CD4-positive, alpha-beta memory T cell (primary cell): ENCODE measurements at regions of chr13 and their contacts with region 1.

Region 1: GRCh38 chr13:113208424-113209335 is at the start of gene PCID2:
- DNase-seq: peak; percentile 89 to 95 (median 91)
- H3K4me3 ChIP-seq: peak within 1 kb of the TSS; percentile 73 to 80
- H3K4me3 Mint-ChIP-seq: peak within 1 kb of the TSS; percentile 86 to 92 (median 90)
- H3K27ac ChIP-seq: peak within 1 kb of the TSS; percentile 89
- H3K27ac Mint-ChIP-seq: peak within 1 kb of the TSS; percentile 89 to 96 (median 95)
- H3K4me1 ChIP-seq: peaks cover 78% of the 10 kb centered on the region
- H3K4me1 Mint-ChIP-seq: peaks cover 43 to 64% (median 53%) of the 10 kb centered on the region in 4 donors
- H3K27me3 ChIP-seq: no peaks in the 10 kb centered on the region
- H3K27me3 Mint-ChIP-seq: no peaks in the 10 kb centered on the region
- total RNA-seq, gene PCID2: 78.2 to 79.8 TPM

Region 2: GRCh38 chr13:113153810-113154748 is 54.6 kb before region 1 on chr13:
- CTCF ChIA-PET with region 1: interaction called, 3 read pairs
- POLR2A ChIA-PET with region 1: interaction called, 42 read pairs
- intact Hi-C with region 1: loop called (anchors 1 kb)
- DNase-seq: peak; percentile 57 to 76 (median 75)
- H3K4me3 ChIP-seq: peak overlapping the region; percentile 73 to 93
- H3K4me3 Mint-ChIP-seq: peak overlapping the region; percentile 83 to 89 (median 86)
- H3K27ac ChIP-seq: peak overlapping the region; percentile 49
- H3K27ac Mint-ChIP-seq: peak overlapping the region; percentile 87 to 98 (median 96)
- H3K4me1 ChIP-seq: peaks cover 23% of the 10 kb centered on the region
- H3K4me1 Mint-ChIP-seq: peaks cover 7 to 26% (median 20%) of the 10 kb centered on the region in 4 donors
- H3K27me3 ChIP-seq: no peaks in the 10 kb centered on the region
- H3K27me3 Mint-ChIP-seq: no peaks in the 10 kb centered on the region

Region 3: GRCh38 chr13:113169277-113170272 is 39.1 kb before region 1 on chr13:
- CTCF ChIA-PET with region 1: no interaction called
- POLR2A ChIA-PET with region 1: interaction called, 14 read pairs
- intact Hi-C with region 1: loop called (anchors 5 kb)
- DNase-seq: no peak
- H3K4me3 ChIP-seq: no peak overlapping the region
- H3K4me3 Mint-ChIP-seq: no peak overlapping the region
- H3K27ac ChIP-seq: no peak overlapping the region
- H3K27ac Mint-ChIP-seq: peak overlapping the region in 4 of 7 donors; percentile 5 to 66 (median 24)
- H3K4me1 ChIP-seq: peaks cover 15% of the 10 kb centered on the region
- H3K4me1 Mint-ChIP-seq: peaks cover 14 to 32% (median 15%) of the 10 kb centered on the region in 4 donors
- H3K27me3 ChIP-seq: no peaks in the 10 kb centered on the region
- H3K27me3 Mint-ChIP-seq: no peaks in the 10 kb centered on the region

Region 4: GRCh38 chr13:113187263-113187669 is 21.4 kb before region 1 on chr13:
- CTCF ChIA-PET with region 1: interaction called, 8 read pairs
- POLR2A ChIA-PET with region 1: interaction called, 66 read pairs
- intact Hi-C with region 1: loop called (anchors 2 kb)
- DNase-seq: peak in 1 of 5 donors; percentile 63
- H3K4me3 ChIP-seq: no peak overlapping the region
- H3K4me3 Mint-ChIP-seq: peak overlapping the region in 7 of 8 donors; percentile 52 to 83 (median 59)
- H3K27ac ChIP-seq: peak overlapping the region; percentile 16
- H3K27ac Mint-ChIP-seq: peak overlapping the region in 6 of 7 donors; percentile 46 to 91 (median 86)
- H3K4me1 ChIP-seq: peaks cover 43% of the 10 kb centered on the region
- H3K4me1 Mint-ChIP-seq: peaks cover 29 to 54% (median 39%) of the 10 kb centered on the region in 4 donors
- H3K27me3 ChIP-seq: no peaks in the 10 kb centered on the region
- H3K27me3 Mint-ChIP-seq: no peaks in the 10 kb centered on the region

Region 5: GRCh38 chr13:113448885-113449692 is 240.4 kb after region 1 on chr13:
- CTCF ChIA-PET with region 1: no interaction called
- POLR2A ChIA-PET with region 1: no interaction called
- intact Hi-C with region 1: loop called (anchors 2 kb)
- DNase-seq: peak; percentile 19 to 90 (median 54)
- H3K4me3 ChIP-seq: no peak overlapping the region
- H3K4me3 Mint-ChIP-seq: peak overlapping the region in 4 of 8 donors; percentile 9 to 65 (median 60)
- H3K27ac ChIP-seq: no peak overlapping the region
- H3K27ac Mint-ChIP-seq: peak overlapping the region in 3 of 7 donors; percentile 3 to 81 (median 68)
- H3K4me1 ChIP-seq: no peaks in the 10 kb centered on the region
- H3K4me1 Mint-ChIP-seq: peaks cover 0 to 4% (median 0%) of the 10 kb centered on the region in 4 donors
- H3K27me3 ChIP-seq: no peaks in the 10 kb centered on the region
- H3K27me3 Mint-ChIP-seq: no peaks in the 10 kb centered on the region

Region 6: DNA sequence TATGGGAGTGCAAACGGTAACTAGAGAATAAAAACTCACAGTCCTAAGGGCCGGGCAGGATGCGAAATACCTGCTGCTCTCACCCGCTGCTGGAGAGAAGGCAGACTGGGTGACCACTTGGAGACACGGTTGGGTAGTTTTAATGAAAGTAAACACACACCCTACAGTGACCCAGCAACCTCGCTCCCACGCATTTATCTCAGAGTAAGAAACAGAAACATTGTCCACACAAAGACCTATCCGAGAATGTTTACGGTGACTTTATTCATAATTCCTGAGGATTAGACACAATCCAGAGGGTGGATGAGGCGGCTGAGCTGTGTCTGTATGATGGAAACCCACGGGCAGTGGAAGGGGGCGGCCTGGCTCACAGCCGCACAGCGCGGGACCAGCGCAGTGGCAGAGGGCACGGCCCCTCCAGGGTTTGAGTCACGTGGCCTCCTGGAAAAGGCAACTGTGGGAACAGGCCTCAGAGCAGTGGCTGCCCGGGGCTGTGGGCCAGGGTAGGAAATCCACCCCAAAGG is 838.7 kb after region 1 on chr13:
- CTCF ChIA-PET with region 1: no interaction called
- POLR2A ChIA-PET with region 1: no interaction called
- intact Hi-C with region 1: no loop called
- DNase-seq: no peak
- H3K4me3 ChIP-seq: no peak overlapping the region
- H3K4me3 Mint-ChIP-seq: peak overlapping the region in 4 of 8 donors; percentile 17 to 45 (median 18)
- H3K27ac ChIP-seq: no peak overlapping the region
- H3K27ac Mint-ChIP-seq: peak overlapping the region in 6 of 7 donors; percentile 0 to 91 (median 62)
- H3K4me1 ChIP-seq: peaks cover 53% of the 10 kb centered on the region
- H3K4me1 Mint-ChIP-seq: peaks cover 30 to 78% (median 56%) of the 10 kb centered on the region in 4 donors
- H3K27me3 ChIP-seq: no peaks in the 10 kb centered on the region
- H3K27me3 Mint-ChIP-seq: no peaks in the 10 kb centered on the region